ENCODE measurements at regions of chr9 and their contacts with region 1.

Region 1: DNA sequence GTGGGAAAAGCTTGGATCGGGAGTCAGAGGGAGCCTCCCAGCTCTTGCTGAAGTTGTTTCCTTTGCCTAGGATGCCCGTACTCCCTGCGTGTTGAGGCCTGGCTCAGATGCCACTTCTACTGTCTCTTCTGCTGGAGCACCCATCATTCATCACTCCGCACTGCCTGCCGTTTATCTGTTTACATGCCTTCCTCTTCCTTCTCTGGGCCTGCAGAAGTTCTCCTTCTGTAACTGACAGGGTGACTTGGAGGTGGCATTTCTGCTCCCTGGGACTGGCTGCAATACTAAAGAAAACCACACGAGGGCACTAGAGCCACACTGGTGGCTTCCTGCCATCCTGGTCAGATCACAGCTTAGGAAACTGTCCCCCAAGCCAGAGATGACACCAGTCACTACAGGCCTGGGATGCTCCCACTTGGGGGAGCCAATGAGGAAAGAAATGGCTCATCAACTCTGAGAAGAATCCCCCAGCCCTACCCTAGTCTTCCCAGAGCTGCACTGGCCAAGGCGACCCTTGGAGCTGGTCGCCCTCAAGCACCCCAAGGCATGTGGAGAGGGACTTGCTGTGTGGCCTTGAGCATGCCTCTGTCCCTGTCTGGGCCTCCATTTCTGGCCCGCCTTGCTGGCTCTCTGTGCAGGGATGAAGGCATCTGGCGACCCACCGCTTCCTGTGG is 9.7 kb upstream of the SLC25A51 start:
- DNase-seq: peak; percentile 47
- ATAC-seq: peak; percentile 93
- H3K4me3 ChIP-seq: no peak overlapping the region
- H3K27ac ChIP-seq: no peak overlapping the region
- H3K4me1 ChIP-seq: no peaks in the 10 kb centered on the region; the same call in 1 of the 2 replicates
- H3K27me3 ChIP-seq: no peaks in the 10 kb centered on the region
- CTCF ChIP-seq: peak; percentile 96 to 98 (median 97)
- EP300 ChIP-seq: no peak
- POLR2A ChIP-seq: no peak
- RAD21 ChIP-seq: peak; percentile 97

Region 2: DNA sequence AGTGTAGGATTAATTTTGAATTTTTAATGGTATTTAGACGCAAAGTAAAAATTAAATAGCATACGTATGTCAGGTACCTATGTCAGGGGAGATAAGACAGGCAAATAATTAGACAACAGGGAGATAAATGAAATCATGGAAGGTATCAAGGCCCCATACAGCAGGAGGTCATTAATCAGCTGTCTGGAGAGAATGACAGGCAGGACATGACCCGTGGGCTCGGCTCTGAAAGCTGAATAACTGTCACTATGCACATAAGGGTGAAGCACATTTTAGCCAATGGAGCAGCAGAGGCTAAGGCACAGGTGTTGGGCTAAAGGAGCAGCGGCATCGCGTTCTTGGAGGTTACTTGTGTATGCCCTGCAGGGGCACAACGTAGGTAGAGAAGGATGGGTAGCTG is 21.6 kb before region 1 on chr9:
- CTCF ChIA-PET with region 1: no interaction called
- POLR2A ChIA-PET with region 1: no interaction called
- RAD21 ChIA-PET with region 1: no interaction called
- SMC1A ChIA-PET with region 1: no interaction called
- in situ Hi-C with region 1: no loop called
- intact Hi-C with region 1: no loop called
- DNase-seq: no peak
- ATAC-seq: no peak
- H3K4me3 ChIP-seq: no peak overlapping the region
- H3K27ac ChIP-seq: no peak overlapping the region
- H3K4me1 ChIP-seq: no peaks in the 10 kb centered on the region
- H3K27me3 ChIP-seq: no peaks in the 10 kb centered on the region
- CTCF ChIP-seq: no peak
- EP300 ChIP-seq: no peak
- POLR2A ChIP-seq: no peak
- RAD21 ChIP-seq: no peak

Region 3: DNA sequence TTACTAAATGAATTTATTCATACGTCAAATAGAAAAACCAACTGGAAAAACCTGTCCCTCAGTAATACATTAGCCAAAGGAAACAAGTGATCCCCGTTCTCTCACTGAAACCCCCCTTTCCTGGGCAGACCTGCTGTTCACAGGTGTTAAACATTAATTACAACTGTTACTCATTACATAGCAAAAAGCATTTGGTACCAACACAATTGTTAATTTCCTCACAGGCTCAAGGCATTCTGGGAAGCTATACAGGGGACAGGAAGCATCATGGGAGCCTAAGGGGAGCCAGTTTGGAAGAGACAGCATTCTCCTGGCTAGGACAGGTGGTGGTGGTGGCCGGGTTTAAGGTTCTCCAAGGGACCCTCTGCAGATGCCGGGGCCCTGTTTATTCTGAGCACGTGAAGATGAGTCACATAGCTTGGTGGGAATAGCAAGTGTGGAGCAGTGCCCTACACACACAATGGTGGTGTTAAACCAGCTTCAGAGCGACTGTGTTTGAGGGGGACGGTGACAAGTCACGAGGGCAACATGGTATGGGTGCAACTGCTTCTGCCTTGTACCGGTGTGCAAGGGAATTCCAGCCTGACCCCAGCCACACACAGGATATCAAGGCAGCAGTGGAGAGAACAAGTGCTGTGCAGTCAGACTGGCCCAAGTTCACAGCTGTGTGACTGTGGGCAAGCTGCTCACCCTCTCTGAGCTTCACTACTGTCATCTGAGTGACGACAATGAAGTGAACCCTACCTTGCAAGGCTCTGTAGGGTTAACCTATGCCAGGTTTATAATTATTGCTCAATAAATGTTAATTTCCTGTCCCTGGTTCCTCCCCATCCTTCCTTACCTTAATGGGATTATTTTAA is 53.0 kb after region 1 on chr9:
- CTCF ChIA-PET with region 1: interaction called, 4 read pairs
- POLR2A ChIA-PET with region 1: no interaction called
- RAD21 ChIA-PET with region 1: interaction called, 4 read pairs
- SMC1A ChIA-PET with region 1: interaction called, 7 read pairs
- in situ Hi-C with region 1: loop called (anchors 5 kb)
- intact Hi-C with region 1: no loop called
- DNase-seq: no peak
- ATAC-seq: peak; percentile 30
- H3K4me3 ChIP-seq: no peak overlapping the region
- H3K27ac ChIP-seq: no peak overlapping the region
- H3K4me1 ChIP-seq: peaks cover 3% of the 10 kb centered on the region; the same call in 1 of the 2 replicates
- H3K27me3 ChIP-seq: no peaks in the 10 kb centered on the region; a peak in 1 of 4 replicates
- CTCF ChIP-seq: no peak
- EP300 ChIP-seq: no peak
- POLR2A ChIP-seq: no peak
- RAD21 ChIP-seq: no peak

Region 4: GRCh38 chr9:38068866-38069629 is 155.4 kb after region 1 on chr9 and contains the start of gene SHB:
- CTCF ChIA-PET with region 1: interaction called, 21 read pairs
- POLR2A ChIA-PET with region 1: interaction called, 3 read pairs
- RAD21 ChIA-PET with region 1: interaction called, 18 read pairs
- SMC1A ChIA-PET with region 1: interaction called, 39 read pairs
- in situ Hi-C with region 1: no loop called
- intact Hi-C with region 1: loop called (anchors 1 kb)
- DNase-seq: no peak
- ATAC-seq: peak; percentile 67
- H3K4me3 ChIP-seq: peak within 1 kb of the TSS; percentile 90
- H3K27ac ChIP-seq: no peak within 1 kb of the TSS
- H3K4me1 ChIP-seq: peaks cover 28% of the 10 kb centered on the region
- H3K27me3 ChIP-seq: peaks cover 2 to 9% of the 10 kb centered on the region in 2 experiments; a peak in 3 of 4 replicates
- CTCF ChIP-seq: no peak
- EP300 ChIP-seq: no peak
- POLR2A ChIP-seq: peak; percentile 80
- RAD21 ChIP-seq: no peak
- polyA plus RNA-seq, gene SHB: 0.56 to 0.69 TPM

Region 5: GRCh38 chr9:38362852-38363593 is 449.4 kb after region 1 on chr9:
- CTCF ChIA-PET with region 1: interaction called, 120 read pairs
- POLR2A ChIA-PET with region 1: interaction called, 3 read pairs
- RAD21 ChIA-PET with region 1: interaction called, 31 read pairs
- SMC1A ChIA-PET with region 1: interaction called, 33 read pairs
- in situ Hi-C with region 1: loop called (anchors 5 kb)
- intact Hi-C with region 1: loop called (anchors 1 kb)
- DNase-seq: peak; percentile 35
- ATAC-seq: peak; percentile 86
- H3K4me3 ChIP-seq: no peak overlapping the region
- H3K27ac ChIP-seq: no peak overlapping the region
- H3K4me1 ChIP-seq: no peaks in the 10 kb centered on the region
- H3K27me3 ChIP-seq: no peaks in the 10 kb centered on the region
- CTCF ChIP-seq: peak; percentile 50 to 84 (median 57); a peak in 5 of 6 replicates
- EP300 ChIP-seq: no peak
- POLR2A ChIP-seq: no peak
- RAD21 ChIP-seq: peak; percentile 87